Thyroid gland (tissue), 4 donors: ENCODE measurements at regions of chr11 and their contacts with region 1.

Region 1: GRCh38 chr11:65180877-65181568 is 705 bp upstream of the CAPN1 start:
- DNase-seq: peak; percentile 67 to 69
- H3K4me3 ChIP-seq: peak overlapping the region; percentile 22 to 84 (median 83)
- H3K27ac ChIP-seq: peak overlapping the region; percentile 74 to 99 (median 92)
- H3K4me1 ChIP-seq: peaks cover 30 to 39% of the 10 kb centered on the region in 2 donors
- H3K27me3 ChIP-seq: no peaks in the 10 kb centered on the region
- CTCF ChIP-seq: peak in 5 of 6 experiments; percentile 20 to 62 (median 43)
- POLR2A ChIP-seq: peak in 1 of 2 donors; percentile 47

Region 2: GRCh38 chr11:64741375-64742086 is 439.5 kb before region 1 on chr11:
- intact Hi-C with region 1: no loop called
- DNase-seq: no peak
- H3K4me3 ChIP-seq: no peak overlapping the region
- H3K27ac ChIP-seq: no peak overlapping the region
- H3K4me1 ChIP-seq: peaks cover 27 to 44% of the 10 kb centered on the region in 2 donors
- H3K27me3 ChIP-seq: peaks cover 27% of the 10 kb centered on the region
- CTCF ChIP-seq: no peak
- POLR2A ChIP-seq: no peak

Region 3: DNA sequence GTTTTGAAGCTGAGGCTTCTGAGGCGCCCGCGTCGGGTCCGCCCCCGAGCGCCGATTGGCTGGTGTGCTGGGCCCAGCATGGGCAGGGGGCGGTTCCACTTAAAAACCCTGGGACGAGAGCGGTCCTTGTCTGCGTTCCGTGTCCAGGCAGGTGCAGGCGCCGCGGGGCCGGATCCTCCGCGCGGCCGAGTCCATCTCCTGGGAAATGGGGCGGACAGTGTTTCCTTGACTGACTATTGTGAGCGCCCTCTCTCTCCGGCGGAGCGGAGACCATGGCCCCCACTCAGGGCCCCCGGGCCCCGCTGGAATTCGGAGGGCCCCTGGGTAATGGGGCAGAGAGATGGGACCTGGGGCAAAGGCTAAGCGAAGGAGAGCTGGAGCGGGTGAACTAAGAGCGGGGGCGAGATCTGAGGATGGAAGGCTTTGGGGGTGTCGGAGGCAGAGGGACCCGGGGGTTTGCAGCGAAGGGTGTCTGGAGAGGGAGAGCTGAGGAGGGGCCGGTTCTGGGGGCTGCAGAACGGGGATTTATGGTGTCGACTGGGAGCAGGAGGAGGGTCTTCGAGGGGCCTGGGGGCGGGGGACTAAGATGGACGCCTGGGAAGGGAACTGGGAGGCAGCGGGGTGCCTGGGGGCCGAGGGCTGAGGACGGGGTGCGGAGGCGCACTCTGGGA is 69.1 kb before region 1 on chr11 and contains the start of gene TM7SF2:
- intact Hi-C with region 1: loop called (anchors 5 kb)
- DNase-seq: peak; percentile 99
- H3K4me3 ChIP-seq: peak within 1 kb of the TSS in 2 of 3 donors; percentile 24 to 45
- H3K27ac ChIP-seq: peak within 1 kb of the TSS; percentile 39 to 74 (median 62)
- H3K4me1 ChIP-seq: peaks cover 37 to 43% of the 10 kb centered on the region in 2 donors
- H3K27me3 ChIP-seq: no peaks in the 10 kb centered on the region
- CTCF ChIP-seq: no peak
- POLR2A ChIP-seq: peak; percentile 45 to 94
- total RNA-seq, gene TM7SF2: 20.0 to 99.4 (median 53.5) TPM

Region 4: GRCh38 chr11:65134386-65135253 is 46.4 kb before region 1 on chr11 and contains the start of gene SYVN1:
- intact Hi-C with region 1: loop called (anchors 5 kb)
- DNase-seq: peak; percentile 99
- H3K4me3 ChIP-seq: peak within 1 kb of the TSS; percentile 50 to 90 (median 66)
- H3K27ac ChIP-seq: peak within 1 kb of the TSS; percentile 94 to 98 (median 96)
- H3K4me1 ChIP-seq: peaks cover 24 to 29% of the 10 kb centered on the region in 2 donors
- H3K27me3 ChIP-seq: no peaks in the 10 kb centered on the region
- CTCF ChIP-seq: peak in 2 of 6 experiments; percentile 16 to 25
- POLR2A ChIP-seq: peak; percentile 85 to 92
- total RNA-seq, gene SYVN1: 28.8 to 103 (median 69.7) TPM